B cell (primary cell): ENCODE measurements at regions of chr1 and their contacts with region 1.

Region 1: DNA sequence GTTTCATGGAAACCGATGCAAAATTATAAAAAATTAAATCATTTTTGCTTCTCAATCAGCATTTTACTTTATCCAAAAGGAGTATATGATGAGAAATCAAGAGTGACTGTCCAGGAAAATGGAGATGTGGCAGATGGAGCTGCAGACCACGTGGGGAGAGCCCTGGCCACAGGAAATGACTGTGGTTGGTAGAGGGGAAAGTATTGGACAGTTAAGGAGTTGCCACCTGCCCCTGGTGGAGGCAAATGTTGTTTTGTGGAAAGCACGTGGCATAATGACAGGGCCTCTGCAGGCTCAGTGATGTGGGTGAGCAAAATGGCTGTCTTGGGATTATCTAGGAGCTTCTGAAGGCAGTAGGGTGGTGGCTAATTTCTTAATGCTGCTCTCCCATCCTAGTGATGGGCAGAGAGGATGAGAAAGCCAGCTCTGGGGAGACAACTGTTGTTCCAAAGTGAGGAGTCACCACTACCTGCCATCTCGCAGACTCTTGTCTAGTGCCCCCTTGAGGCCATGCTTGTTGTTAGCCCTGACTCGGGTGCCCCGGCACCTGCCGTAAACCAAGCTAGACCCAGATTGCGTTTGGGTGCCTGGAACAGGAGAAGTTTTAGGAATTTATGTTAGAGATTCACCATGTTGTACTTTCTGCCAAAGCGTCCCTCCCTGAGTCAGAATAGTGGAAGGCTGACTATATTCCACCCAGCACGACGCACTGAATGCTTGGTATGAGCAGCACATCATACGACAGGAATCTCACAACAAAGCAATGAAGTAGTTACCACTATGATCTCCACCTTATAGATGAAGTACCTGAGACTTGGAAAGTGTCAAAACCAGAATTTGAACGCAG is 144.0 kb downstream of the ROR1 start:
- DNase-seq: peak; percentile 29
- ATAC-seq: no peak
- H3K4me3 ChIP-seq: no peak overlapping the region
- H3K4me3 Mint-ChIP-seq: no peak overlapping the region
- H3K27ac ChIP-seq: no peak overlapping the region
- H3K27ac Mint-ChIP-seq: no peak overlapping the region
- H3K4me1 ChIP-seq: no peaks in the 10 kb centered on the region
- H3K4me1 Mint-ChIP-seq: no peaks in the 10 kb centered on the region
- H3K27me3 ChIP-seq: no peaks in the 10 kb centered on the region
- H3K27me3 Mint-ChIP-seq: peaks cover 15% of the 10 kb centered on the region
- CTCF ChIP-seq: no peak

Region 2: DNA sequence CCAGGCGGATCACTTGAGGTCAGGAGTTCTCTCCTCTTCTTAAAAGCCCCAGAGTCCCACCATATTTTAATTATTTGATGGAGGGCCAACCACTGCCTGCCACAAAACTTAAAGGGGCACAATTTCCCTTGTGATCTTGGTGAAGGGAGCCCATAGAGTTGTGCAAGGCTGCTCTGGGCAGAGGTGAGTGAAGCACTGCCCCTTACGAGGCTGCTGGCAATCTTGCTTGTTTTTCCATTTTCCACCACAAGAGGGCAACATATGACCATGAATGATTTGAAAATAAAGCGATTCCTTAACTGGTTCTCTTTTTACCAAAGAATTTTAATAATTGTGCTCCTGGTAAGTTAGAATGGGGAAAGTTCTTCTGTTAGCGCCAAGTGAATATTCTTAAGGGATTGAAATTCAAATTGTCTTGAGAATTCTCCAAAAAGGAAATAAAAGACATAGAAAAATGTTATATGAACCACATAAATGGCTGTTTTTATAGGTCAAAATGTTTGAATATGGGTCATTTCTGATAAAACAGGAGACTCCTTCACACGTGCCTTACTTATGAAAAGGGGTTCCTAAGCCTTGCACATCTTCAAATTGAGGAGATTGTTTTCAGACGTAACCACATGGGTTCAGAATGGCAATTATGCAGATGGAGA is 301.9 kb before region 1 on chr1:
- CTCF ChIA-PET with region 1: interaction called, 12 read pairs
- POLR2A ChIA-PET with region 1: no interaction called
- intact Hi-C with region 1: loop called (anchors 1 kb)
- DNase-seq: peak; percentile 80
- ATAC-seq: peak; percentile 71
- H3K4me3 ChIP-seq: no peak overlapping the region
- H3K4me3 Mint-ChIP-seq: no peak overlapping the region
- H3K27ac ChIP-seq: no peak overlapping the region
- H3K27ac Mint-ChIP-seq: no peak overlapping the region
- H3K4me1 ChIP-seq: no peaks in the 10 kb centered on the region
- H3K4me1 Mint-ChIP-seq: no peaks in the 10 kb centered on the region
- H3K27me3 ChIP-seq: no peaks in the 10 kb centered on the region
- H3K27me3 Mint-ChIP-seq: no peaks in the 10 kb centered on the region
- CTCF ChIP-seq: peak; percentile 91

Region 3: GRCh38 chr1:63773815-63774616 is 143.8 kb before region 1 on chr1 and contains the start of gene ROR1:
- CTCF ChIA-PET with region 1: interaction called, 40 read pairs
- POLR2A ChIA-PET with region 1: no interaction called
- intact Hi-C with region 1: loop called (anchors 1 kb)
- DNase-seq: peak; percentile 72
- ATAC-seq: peak; percentile 90
- H3K4me3 ChIP-seq: peak within 1 kb of the TSS; percentile 42 to 72 (median 53)
- H3K4me3 Mint-ChIP-seq: peak within 1 kb of the TSS; percentile 86
- H3K27ac ChIP-seq: no peak within 1 kb of the TSS
- H3K27ac Mint-ChIP-seq: peak within 1 kb of the TSS; percentile 42
- H3K4me1 ChIP-seq: peaks cover 12 to 21% of the 10 kb centered on the region in 2 donors
- H3K4me1 Mint-ChIP-seq: peaks cover 20% of the 10 kb centered on the region
- H3K27me3 ChIP-seq: peaks cover 0 to 31% (median 25%) of the 10 kb centered on the region in 4 experiments
- H3K27me3 Mint-ChIP-seq: peaks cover 55% of the 10 kb centered on the region
- CTCF ChIP-seq: peak; percentile 43
- total RNA-seq, gene ROR1: 16.0 and 16.3 TPM in 2 replicates

Region 4: DNA sequence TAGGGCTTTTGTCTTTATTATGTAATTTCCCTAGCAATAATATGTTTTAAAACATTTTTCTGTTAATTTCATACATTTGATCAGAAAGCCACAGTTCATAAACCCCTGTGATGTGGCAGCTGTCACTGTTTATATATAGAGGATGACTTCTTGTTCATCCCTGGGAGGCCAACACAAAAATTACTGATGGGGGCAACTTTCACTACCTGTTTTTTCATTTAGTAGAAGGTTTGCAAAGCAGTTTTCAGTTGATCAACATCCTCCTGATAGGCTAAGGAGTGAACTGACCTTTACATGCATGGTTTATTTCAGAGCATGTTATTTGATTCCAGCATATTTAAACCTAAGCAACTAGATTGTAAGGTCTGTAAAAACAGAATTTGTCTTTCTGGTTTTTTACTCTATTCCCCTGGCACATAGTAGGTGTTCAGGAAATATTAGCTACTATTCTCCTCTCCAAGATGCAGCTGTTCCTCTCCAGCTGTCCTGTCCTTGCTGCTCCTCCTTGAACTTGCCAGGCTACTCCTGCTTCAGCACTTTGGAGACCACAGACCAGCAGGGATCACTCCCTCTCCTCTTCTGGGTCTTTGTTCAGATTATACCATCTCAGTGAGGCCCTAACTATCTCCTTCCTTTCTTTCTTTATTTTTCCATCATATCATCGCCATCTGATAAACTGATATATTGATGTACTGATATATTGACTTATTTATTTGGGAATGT is 89.3 kb before region 1 on chr1:
- CTCF ChIA-PET with region 1: interaction called, 4 read pairs
- POLR2A ChIA-PET with region 1: no interaction called
- intact Hi-C with region 1: loop called (anchors 5 kb)
- DNase-seq: peak; percentile 53
- ATAC-seq: peak; percentile 90
- H3K4me3 ChIP-seq: no peak overlapping the region
- H3K4me3 Mint-ChIP-seq: peak overlapping the region; percentile 24
- H3K27ac ChIP-seq: peak overlapping the region; percentile 40 to 59
- H3K27ac Mint-ChIP-seq: peak overlapping the region; percentile 64
- H3K4me1 ChIP-seq: peaks cover 35 to 43% of the 10 kb centered on the region in 2 donors
- H3K4me1 Mint-ChIP-seq: peaks cover 51% of the 10 kb centered on the region
- H3K27me3 ChIP-seq: no peaks in the 10 kb centered on the region
- H3K27me3 Mint-ChIP-seq: peaks cover 4% of the 10 kb centered on the region
- CTCF ChIP-seq: no peak

Region 5: GRCh38 chr1:63902844-63903589 is 14.8 kb before region 1 on chr1:
- CTCF ChIA-PET with region 1: interaction called, 12 read pairs
- POLR2A ChIA-PET with region 1: interaction called, 5 read pairs
- intact Hi-C with region 1: no loop called
- DNase-seq: no peak
- ATAC-seq: no peak
- H3K4me3 ChIP-seq: no peak overlapping the region
- H3K4me3 Mint-ChIP-seq: no peak overlapping the region
- H3K27ac ChIP-seq: no peak overlapping the region
- H3K27ac Mint-ChIP-seq: no peak overlapping the region
- H3K4me1 ChIP-seq: peaks cover 7 to 9% of the 10 kb centered on the region in 2 donors
- H3K4me1 Mint-ChIP-seq: peaks cover 11% of the 10 kb centered on the region
- H3K27me3 ChIP-seq: peaks cover 0 to 15% (median 2%) of the 10 kb centered on the region in 4 experiments
- H3K27me3 Mint-ChIP-seq: peaks cover 33% of the 10 kb centered on the region
- CTCF ChIP-seq: no peak

Region 6: GRCh38 chr1:64136752-64137411 is 219.1 kb after region 1 on chr1:
- CTCF ChIA-PET with region 1: interaction called, 3 read pairs
- POLR2A ChIA-PET with region 1: no interaction called
- intact Hi-C with region 1: loop called (anchors 5 kb)
- DNase-seq: peak; percentile 68
- ATAC-seq: peak; percentile 80
- H3K4me3 ChIP-seq: no peak overlapping the region
- H3K4me3 Mint-ChIP-seq: no peak overlapping the region
- H3K27ac ChIP-seq: no peak overlapping the region
- H3K27ac Mint-ChIP-seq: no peak overlapping the region
- H3K4me1 ChIP-seq: no peaks in the 10 kb centered on the region
- H3K4me1 Mint-ChIP-seq: peaks cover 2% of the 10 kb centered on the region
- H3K27me3 ChIP-seq: peaks cover 0 to 4% (median 0%) of the 10 kb centered on the region in 4 experiments
- H3K27me3 Mint-ChIP-seq: peaks cover 15% of the 10 kb centered on the region
- CTCF ChIP-seq: peak; percentile 87